Endothelial cell of umbilical vein (primary cell): ENCODE measurements at regions of chr3 and their contacts with region 1.

Region 1: GRCh38 chr3:117059067-117059955 is 349.7 kb downstream of the TUSC7 start:
- DNase-seq: peak; percentile 22
- H3K4me3 ChIP-seq: no peak overlapping the region
- H3K27ac ChIP-seq: no peak overlapping the region
- H3K4me1 ChIP-seq: no peaks in the 10 kb centered on the region
- H3K27me3 ChIP-seq: peaks cover 0 to 2% of the 10 kb centered on the region in 2 experiments
- CTCF ChIP-seq: peak; percentile 25 to 30
- POLR2A ChIP-seq: no peak

Region 2: GRCh38 chr3:117355566-117355965 is 296.3 kb after region 1 on chr3:
- CTCF ChIA-PET with region 1: interaction called, 7 read pairs
- POLR2A ChIA-PET with region 1: no interaction called
- dilution Hi-C with region 1: no loop called
- intact Hi-C with region 1: loop called (anchors 1 kb)
- DNase-seq: peak; percentile 45
- H3K4me3 ChIP-seq: no peak overlapping the region
- H3K27ac ChIP-seq: no peak overlapping the region
- H3K4me1 ChIP-seq: no peaks in the 10 kb centered on the region
- H3K27me3 ChIP-seq: no peaks in the 10 kb centered on the region
- CTCF ChIP-seq: peak; percentile 32 to 49
- POLR2A ChIP-seq: no peak

Region 3: DNA sequence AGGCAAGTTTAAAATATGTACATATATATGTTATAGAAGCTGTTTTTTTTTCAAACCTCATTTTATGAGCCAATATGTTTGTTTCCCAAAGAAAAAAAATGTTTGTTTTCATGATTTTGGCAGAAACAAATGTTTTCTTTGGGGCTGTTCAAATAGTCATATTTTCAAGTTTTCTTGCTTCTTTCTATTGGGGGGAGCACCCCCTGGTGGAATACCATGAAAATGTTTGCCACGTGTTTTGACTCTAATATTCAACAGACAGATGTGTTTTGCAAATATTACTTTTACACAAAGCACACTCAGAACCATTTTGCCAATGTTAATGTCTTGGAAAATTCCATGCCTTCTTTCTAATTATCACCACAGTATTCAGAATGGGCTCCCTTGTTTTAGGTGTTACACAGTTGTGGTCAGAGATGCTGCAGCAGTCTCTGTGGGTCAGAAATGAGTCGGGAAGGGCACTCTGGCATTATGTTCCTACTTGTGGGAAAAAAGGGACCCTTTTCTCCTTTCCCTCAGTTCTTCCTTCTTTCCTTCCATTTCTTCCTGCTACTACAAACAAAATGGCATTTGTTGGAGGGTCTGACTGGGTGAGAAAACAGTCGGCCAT is 467.3 kb after region 1 on chr3:
- CTCF ChIA-PET with region 1: interaction called, 15 read pairs
- POLR2A ChIA-PET with region 1: no interaction called
- dilution Hi-C with region 1: no loop called
- intact Hi-C with region 1: loop called (anchors 1 kb)
- DNase-seq: peak; percentile 40
- H3K4me3 ChIP-seq: no peak overlapping the region
- H3K27ac ChIP-seq: no peak overlapping the region
- H3K4me1 ChIP-seq: no peaks in the 10 kb centered on the region
- H3K27me3 ChIP-seq: peaks cover 0 to 3% of the 10 kb centered on the region in 2 experiments
- CTCF ChIP-seq: peak; percentile 42 to 53
- POLR2A ChIP-seq: no peak